ENCODE measurements at regions of chr22 and their contacts with region 1.

Region 1: DNA sequence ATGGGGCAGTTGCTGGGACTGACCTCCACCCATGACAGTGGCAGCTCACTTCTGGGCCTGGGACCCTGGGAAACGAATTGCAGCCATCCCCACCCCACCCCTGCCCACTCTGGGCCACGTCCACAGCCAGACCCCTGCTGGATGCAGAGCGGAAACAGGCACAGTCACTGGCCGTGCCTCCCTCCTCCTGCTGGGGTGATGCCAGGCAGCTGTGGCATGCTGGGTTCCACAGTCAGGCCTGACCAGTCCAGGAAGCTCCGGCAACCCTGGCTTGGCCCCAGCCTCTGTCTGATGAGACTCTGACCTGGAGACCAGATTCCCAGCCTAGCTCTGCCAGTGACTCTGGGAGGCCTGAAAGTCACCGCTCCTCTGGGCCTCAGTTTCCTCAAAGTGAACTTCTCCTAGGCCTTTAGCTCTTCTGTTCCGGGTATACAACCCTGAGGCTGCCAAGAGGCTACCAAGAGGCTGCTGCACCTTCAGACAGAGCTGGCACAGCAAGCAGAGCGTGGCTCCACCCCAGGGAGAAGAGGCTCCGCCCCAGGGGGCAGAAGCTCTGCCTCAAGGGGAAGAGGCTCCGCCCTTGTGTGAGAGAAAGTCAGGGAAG is 8.9 kb downstream of the SULT4A1 start:
- DNase-seq: no peak
- H3K4me3 ChIP-seq: no peak overlapping the region
- H3K27ac ChIP-seq: no peak overlapping the region
- H3K4me1 ChIP-seq: no peaks in the 10 kb centered on the region
- H3K27me3 ChIP-seq: no peaks in the 10 kb centered on the region
- CTCF ChIP-seq: no peak

Region 2: DNA sequence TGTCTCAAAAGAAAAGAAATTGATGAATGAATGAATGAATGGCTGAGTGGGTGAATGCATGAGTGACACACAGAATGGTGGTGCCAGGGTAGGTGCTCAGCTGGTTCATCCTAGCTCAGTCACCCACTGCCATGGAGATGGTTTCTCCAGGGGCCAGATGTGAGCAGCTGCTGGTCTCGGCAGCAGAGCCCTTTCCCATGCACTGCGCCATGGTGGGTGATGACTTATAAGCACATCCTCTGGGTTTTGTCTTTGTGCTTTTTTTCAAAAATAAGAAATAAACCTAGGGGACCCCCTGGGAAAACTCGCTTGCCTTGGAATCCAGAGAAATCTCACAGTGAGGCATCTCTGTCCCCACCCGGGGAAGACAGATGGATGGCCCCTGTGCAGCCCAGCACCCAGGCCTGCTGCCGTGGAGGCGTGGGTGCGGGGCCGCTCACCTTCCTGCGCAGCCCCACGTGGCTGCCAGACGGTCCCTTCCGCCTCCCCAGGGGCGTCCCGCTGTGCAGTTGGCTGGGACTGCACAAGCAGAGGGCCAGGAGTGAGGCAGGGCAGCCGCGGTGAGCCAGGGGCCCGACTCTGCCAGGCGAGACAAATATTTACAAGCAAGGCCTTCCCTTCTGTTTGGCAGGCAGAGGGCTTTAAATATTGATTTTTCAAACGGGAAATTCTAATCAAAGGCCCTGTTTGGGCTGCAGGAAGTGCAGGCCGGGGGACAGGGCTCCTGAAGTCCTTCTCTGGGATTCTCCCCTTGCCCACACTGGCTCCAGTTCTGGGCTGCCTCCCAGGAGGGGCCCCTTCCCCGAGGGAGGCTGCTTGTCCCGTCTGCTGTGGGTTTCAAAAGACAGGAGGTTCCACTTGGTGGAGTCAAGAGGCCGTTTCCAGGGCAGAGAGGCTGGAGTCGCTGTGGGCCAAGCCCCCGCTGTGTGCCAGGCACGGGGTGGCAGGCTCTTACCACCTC is 417.3 kb before region 1 on chr22:
- CTCF ChIA-PET with region 1: no interaction called
- dilution Hi-C with region 1: loop called (anchors 10 kb)
- in situ Hi-C with region 1: no loop called
- intact Hi-C with region 1: no loop called
- DNase-seq: no peak
- H3K4me3 ChIP-seq: no peak overlapping the region
- H3K27ac ChIP-seq: no peak overlapping the region
- H3K4me1 ChIP-seq: no peaks in the 10 kb centered on the region
- H3K27me3 ChIP-seq: peaks cover 12% of the 10 kb centered on the region
- CTCF ChIP-seq: no peak

Region 3: DNA sequence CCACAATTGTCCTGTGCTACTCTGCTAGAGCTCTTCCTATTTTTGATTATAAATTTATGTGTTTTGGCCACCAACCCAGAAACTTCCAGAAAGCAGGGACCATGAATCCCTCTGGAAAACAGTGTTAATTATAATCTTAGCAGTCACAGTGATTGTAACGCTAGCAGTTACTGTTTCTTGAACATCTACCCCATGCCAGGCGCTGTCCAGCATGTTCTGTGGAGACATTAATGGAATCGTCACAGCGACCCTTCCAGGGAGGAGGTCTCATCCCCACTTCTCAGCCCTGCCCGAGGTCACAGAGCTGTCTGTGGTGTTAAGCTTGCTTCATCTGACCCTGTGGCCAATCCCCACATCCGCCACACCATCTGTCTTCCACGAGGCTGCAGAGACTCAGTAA is 52.3 kb after region 1 on chr22:
- CTCF ChIA-PET with region 1: no interaction called
- dilution Hi-C with region 1: loop called (anchors 5 kb)
- in situ Hi-C with region 1: no loop called
- intact Hi-C with region 1: no loop called
- DNase-seq: no peak
- H3K4me3 ChIP-seq: no peak overlapping the region
- H3K27ac ChIP-seq: no peak overlapping the region
- H3K4me1 ChIP-seq: peaks cover 15% of the 10 kb centered on the region
- H3K27me3 ChIP-seq: peaks cover 4% of the 10 kb centered on the region
- CTCF ChIP-seq: no peak

Region 4: DNA sequence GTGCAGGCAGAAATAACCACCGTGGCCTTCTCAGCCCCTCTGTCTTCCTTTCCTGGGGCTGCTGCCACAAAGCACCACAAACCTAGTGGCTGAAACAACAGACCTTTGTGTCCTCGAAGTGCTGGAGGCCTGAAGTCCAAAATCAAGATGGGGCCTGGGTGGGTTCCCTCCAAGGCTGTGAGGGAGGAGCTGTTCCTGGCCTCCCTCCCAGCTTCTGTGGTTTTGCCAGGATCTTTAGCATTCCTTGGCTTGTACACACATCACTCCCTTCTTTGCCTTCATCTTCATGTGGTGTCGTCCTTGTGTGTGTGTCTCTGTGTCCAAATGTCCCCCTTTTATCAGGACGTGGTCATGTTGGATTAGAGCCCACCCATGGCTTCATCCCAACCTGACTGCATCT is 298.2 kb after region 1 on chr22:
- CTCF ChIA-PET with region 1: no interaction called
- dilution Hi-C with region 1: loop called (anchors 10 kb)
- in situ Hi-C with region 1: no loop called
- intact Hi-C with region 1: no loop called
- DNase-seq: peak; percentile 2
- H3K4me3 ChIP-seq: no peak overlapping the region
- H3K27ac ChIP-seq: no peak overlapping the region
- H3K4me1 ChIP-seq: no peaks in the 10 kb centered on the region
- H3K27me3 ChIP-seq: no peaks in the 10 kb centered on the region
- CTCF ChIP-seq: no peak